CD4-positive, alpha-beta memory T cell (primary cell): ENCODE measurements at regions of chr6 and their contacts with region 1.

Region 1: GRCh38 chr6:27809939-27810767 is 102.0 kb downstream of the OR2B2 start:
- DNase-seq: peak; percentile 85 to 94 (median 92)
- H3K4me3 ChIP-seq: peak overlapping the region; percentile 31 to 67
- H3K4me3 Mint-ChIP-seq: peak overlapping the region; percentile 92 to 99 (median 96)
- H3K27ac ChIP-seq: peak overlapping the region; percentile 79
- H3K27ac Mint-ChIP-seq: peak overlapping the region; percentile 94 to 98 (median 97)
- H3K4me1 ChIP-seq: peaks cover 49% of the 10 kb centered on the region
- H3K4me1 Mint-ChIP-seq: peaks cover 39 to 74% (median 50%) of the 10 kb centered on the region in 4 donors
- H3K27me3 ChIP-seq: no peaks in the 10 kb centered on the region
- H3K27me3 Mint-ChIP-seq: no peaks in the 10 kb centered on the region

Region 2: DNA sequence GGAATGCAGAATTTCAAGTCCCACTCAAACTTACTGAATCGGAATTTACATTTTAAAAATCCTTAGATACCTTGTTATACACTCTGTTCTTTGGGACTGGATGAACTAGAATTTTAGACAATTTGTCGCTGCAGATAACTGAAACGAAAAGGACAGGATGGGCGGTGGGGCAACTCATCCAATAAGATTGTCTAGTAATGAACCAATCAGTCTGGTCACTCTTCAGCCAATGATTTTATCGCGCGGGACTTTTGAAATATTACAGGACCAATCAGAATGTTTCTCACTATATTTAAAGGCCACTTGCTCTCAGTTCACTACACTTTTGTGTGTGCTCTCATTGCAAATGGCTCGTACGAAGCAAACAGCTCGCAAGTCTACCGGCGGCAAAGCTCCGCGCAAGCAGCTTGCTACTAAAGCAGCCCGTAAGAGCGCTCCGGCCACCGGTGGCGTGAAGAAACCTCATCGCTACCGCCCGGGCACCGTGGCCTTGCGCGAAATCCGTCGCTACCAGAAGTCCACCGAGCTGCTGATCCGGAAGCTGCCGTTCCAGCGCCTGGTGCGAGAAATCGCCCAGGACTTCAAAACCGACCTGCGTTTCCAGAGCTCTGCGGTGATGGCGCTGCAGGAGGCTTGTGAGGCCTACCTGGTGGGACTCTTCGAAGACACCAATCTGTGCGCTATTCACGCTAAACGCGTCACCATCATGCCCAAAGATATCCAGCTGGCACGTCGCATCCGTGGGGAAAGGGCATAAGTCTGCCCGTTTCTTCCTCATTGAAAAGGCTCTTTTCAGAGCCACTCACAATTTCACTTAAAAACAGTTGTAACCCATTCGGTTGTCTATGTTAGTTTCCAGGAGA is 1764.9 kb before region 1 on chr6:
- CTCF ChIA-PET with region 1: no interaction called
- POLR2A ChIA-PET with region 1: interaction called, 10 read pairs
- intact Hi-C with region 1: loop called (anchors 5 kb)
- DNase-seq: peak; percentile 88 to 91 (median 90)
- H3K4me3 ChIP-seq: peak overlapping the region; percentile 72 to 74
- H3K4me3 Mint-ChIP-seq: peak overlapping the region; percentile 88 to 98 (median 94)
- H3K27ac ChIP-seq: peak overlapping the region; percentile 76
- H3K27ac Mint-ChIP-seq: peak overlapping the region; percentile 93 to 99 (median 98)
- H3K4me1 ChIP-seq: peaks cover 14% of the 10 kb centered on the region
- H3K4me1 Mint-ChIP-seq: peaks cover 12 to 28% (median 20%) of the 10 kb centered on the region in 4 donors
- H3K27me3 ChIP-seq: no peaks in the 10 kb centered on the region
- H3K27me3 Mint-ChIP-seq: no peaks in the 10 kb centered on the region

Region 3: DNA sequence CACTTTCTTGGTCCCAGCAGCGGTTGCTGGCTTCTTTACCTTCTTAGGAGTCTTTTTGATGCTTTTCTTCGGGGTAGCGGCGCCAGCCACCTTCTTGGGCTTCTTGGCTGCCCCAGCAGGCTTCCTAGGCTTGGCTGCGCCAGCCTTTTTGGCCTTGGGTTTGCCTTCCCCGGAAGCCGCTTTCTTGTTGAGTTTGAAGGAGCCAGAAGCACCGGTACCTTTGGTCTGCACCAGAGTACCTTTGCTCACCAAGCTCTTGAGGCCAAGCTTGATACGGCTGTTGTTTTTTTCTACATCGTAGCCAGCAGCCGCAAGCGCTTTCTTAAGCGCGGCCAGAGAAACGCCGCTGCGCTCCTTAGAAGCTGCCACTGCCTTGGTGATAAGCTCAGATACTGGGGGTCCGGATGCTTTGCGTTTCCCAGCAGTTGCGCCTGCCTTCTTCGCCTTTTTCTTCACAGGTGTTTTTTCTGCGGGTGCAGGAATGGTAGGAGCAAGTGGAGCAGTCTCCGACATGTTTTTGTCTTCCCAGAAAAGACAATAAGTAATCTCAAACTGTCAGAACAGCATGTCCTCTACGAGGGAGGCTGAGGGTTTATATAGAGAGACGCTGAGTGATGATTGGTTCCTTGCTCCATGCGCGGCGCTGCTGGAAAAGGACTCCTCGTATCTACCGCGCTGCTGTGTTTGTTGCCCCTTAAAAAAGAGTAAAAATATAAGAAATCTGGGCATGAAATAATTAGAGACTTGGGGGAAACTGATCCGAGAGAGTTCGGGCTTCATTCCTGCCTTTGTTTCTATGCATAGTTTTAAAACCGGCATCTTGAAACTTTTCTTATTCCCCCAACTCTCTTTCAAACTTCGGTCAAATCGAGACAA is 1575.5 kb before region 1 on chr6:
- CTCF ChIA-PET with region 1: no interaction called
- POLR2A ChIA-PET with region 1: interaction called, 17 read pairs
- intact Hi-C with region 1: no loop called
- DNase-seq: peak; percentile 70 to 87 (median 85)
- H3K4me3 ChIP-seq: peak overlapping the region; percentile 66 to 95
- H3K4me3 Mint-ChIP-seq: peak overlapping the region; percentile 93 to 99 (median 96)
- H3K27ac ChIP-seq: peak overlapping the region; percentile 83
- H3K27ac Mint-ChIP-seq: peak overlapping the region; percentile 90 to 99 (median 96)
- H3K4me1 ChIP-seq: peaks cover 23% of the 10 kb centered on the region
- H3K4me1 Mint-ChIP-seq: peaks cover 18 to 43% (median 26%) of the 10 kb centered on the region in 4 donors
- H3K27me3 ChIP-seq: no peaks in the 10 kb centered on the region
- H3K27me3 Mint-ChIP-seq: no peaks in the 10 kb centered on the region

Region 4: DNA sequence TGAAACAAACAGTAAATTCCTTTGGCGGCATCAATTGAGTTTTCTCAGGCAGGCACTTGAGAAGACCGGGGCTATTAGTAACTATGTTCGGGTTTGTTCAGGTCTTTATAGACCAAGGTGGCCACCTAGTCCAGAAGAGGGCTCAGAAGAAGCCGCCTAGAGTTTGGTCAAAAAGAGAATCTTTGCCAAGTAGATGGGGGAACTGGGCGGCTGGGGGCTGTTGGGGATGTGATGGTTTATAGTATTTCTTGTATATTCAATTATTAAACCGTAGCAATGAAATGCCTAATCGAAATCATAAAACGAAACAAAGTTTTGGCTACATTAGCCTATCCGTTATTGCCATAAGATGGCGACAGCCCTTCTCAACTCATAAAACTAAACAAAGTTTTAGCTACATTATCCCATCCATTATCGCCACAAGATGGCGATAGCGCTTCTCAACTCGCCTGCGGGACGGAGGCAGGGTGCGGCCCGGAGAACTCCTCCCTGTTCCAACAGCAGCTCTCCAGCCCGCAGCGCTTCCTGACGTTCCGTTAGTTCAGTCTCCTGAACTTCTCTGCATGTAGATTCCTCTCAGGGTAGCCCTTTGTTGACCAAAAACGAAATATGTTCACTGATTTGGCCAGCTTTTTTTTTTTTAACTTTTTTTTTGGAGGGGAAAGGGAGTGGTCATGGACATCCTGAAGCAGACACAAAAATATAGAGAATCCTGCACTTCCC is 683.2 kb before region 1 on chr6:
- CTCF ChIA-PET with region 1: interaction called, 7 read pairs
- POLR2A ChIA-PET with region 1: interaction called, 143 read pairs
- intact Hi-C with region 1: loop called (anchors 1 kb)
- DNase-seq: peak; percentile 78 to 86 (median 83)
- H3K4me3 ChIP-seq: peak overlapping the region; percentile 13 to 34
- H3K4me3 Mint-ChIP-seq: peak overlapping the region; percentile 71 to 87 (median 80)
- H3K27ac ChIP-seq: peak overlapping the region; percentile 37
- H3K27ac Mint-ChIP-seq: peak overlapping the region; percentile 79 to 91 (median 89)
- H3K4me1 ChIP-seq: peaks cover 16% of the 10 kb centered on the region
- H3K4me1 Mint-ChIP-seq: peaks cover 14 to 16% (median 16%) of the 10 kb centered on the region in 4 donors
- H3K27me3 ChIP-seq: no peaks in the 10 kb centered on the region
- H3K27me3 Mint-ChIP-seq: no peaks in the 10 kb centered on the region

Region 5: DNA sequence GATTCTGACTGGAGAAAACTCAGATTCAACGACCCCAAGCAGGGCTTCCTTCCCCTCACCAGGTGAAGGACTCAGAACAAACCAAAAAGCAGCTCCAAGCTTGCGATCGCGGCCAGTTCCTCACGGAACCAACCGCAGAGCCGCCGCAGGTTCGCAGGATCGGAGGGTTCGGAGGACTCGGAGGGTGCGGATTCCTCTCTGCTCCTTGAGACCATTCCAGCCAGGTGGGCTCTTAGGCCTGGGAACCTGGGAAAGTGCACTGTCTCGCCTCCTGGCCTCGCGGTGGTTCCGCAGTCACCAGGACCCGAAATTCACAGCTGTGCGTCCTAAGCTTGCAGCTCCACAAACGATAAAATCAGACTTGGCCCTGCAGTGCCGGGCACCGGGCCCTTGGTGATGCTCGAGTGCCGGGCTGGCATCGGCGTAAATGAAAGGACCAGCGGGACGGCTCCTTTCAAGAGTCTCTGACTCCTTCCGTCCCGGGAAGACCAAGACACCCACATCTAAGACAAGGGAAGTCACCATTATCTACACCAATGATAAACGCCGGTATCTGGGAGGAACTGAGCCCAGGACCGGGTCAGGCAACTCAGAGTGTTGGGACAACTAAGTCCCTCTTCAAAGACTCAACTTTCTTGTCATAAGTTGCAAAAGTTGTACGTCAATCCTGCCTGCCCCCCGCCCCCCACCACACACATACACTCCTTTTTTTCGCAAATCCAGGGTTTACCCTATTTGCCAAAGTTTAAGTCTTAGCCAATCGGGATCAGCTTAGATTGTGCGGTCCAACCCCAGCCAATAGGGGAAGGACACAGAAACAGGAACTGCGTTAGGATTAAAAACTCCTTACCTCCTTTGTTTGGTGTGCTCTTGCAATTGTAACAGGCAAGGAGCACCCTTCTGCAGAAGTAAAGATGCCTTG is 632.4 kb before region 1 on chr6:
- CTCF ChIA-PET with region 1: interaction called, 3 read pairs
- POLR2A ChIA-PET with region 1: interaction called, 13 read pairs
- intact Hi-C with region 1: no loop called
- DNase-seq: peak; percentile 68 to 80 (median 70)
- H3K4me3 ChIP-seq: peak overlapping the region; percentile 98
- H3K4me3 Mint-ChIP-seq: peak overlapping the region; percentile 95 to 99 (median 98)
- H3K27ac ChIP-seq: peak overlapping the region; percentile 77
- H3K27ac Mint-ChIP-seq: peak overlapping the region; percentile 86 to 100 (median 93)
- H3K4me1 ChIP-seq: peaks cover 7% of the 10 kb centered on the region
- H3K4me1 Mint-ChIP-seq: peaks cover 5 to 29% (median 13%) of the 10 kb centered on the region in 4 donors
- H3K27me3 ChIP-seq: no peaks in the 10 kb centered on the region
- H3K27me3 Mint-ChIP-seq: peaks cover 3 to 4% of the 10 kb centered on the region in 2 donors

Region 6: DNA sequence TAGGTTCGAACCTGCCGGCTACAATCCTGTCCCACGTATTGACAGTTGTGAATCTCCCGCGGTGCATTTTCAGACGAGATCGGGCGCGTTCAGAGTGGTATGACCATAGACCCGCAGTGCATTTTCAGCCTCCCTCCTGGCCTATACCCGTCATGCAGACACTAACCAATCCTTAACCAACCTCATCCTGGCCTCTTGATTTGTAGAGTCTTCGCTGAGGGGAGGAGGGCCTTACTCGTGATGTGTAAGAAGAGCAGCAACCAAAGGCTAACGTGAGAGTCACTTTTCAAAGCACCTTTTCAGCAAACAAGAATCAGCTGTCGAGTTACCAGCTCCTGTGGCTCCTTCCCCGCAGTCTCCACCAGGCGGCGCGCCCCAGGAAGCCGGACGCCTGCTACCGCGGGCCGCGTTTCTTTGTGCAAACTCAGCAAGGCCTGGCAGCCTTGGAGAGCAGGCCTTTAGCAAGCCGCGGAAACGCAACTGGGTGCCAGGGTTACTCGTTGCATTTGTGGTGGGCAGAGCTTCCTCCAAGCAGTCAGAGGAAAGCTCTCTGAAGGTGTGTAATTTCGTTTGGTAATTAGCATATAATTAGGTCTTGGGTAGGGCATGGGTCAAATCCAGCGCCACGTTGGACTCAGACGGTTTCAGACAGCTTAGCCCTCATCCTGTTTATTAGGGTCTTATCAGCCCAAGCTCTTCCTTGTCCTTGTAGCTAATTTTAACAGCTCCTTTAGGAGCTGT is 37.7 kb before region 1 on chr6:
- CTCF ChIA-PET with region 1: interaction called, 19 read pairs
- POLR2A ChIA-PET with region 1: interaction called, 10 read pairs
- intact Hi-C with region 1: no loop called
- DNase-seq: peak; percentile 82 to 85 (median 84)
- H3K4me3 ChIP-seq: no peak overlapping the region
- H3K4me3 Mint-ChIP-seq: peak overlapping the region in 5 of 8 donors; percentile 0 to 60 (median 51)
- H3K27ac ChIP-seq: no peak overlapping the region
- H3K27ac Mint-ChIP-seq: peak overlapping the region in 5 of 7 donors; percentile 4 to 80 (median 15)
- H3K4me1 ChIP-seq: peaks cover 11% of the 10 kb centered on the region
- H3K4me1 Mint-ChIP-seq: peaks cover 3 to 17% (median 9%) of the 10 kb centered on the region in 4 donors
- H3K27me3 ChIP-seq: peaks cover 5% of the 10 kb centered on the region
- H3K27me3 Mint-ChIP-seq: peaks cover 7 to 26% of the 10 kb centered on the region in 2 donors

Region 7: GRCh38 chr6:27864906-27865849 is 55.0 kb after region 1 on chr6:
- CTCF ChIA-PET with region 1: interaction called, 74 read pairs
- POLR2A ChIA-PET with region 1: interaction called, 640 read pairs
- intact Hi-C with region 1: loop called (anchors 1 kb)
- DNase-seq: peak; percentile 86 to 93 (median 91)
- H3K4me3 ChIP-seq: peak overlapping the region; percentile 33 to 69
- H3K4me3 Mint-ChIP-seq: peak overlapping the region; percentile 96 to 99 (median 99)
- H3K27ac ChIP-seq: peak overlapping the region; percentile 62
- H3K27ac Mint-ChIP-seq: peak overlapping the region; percentile 94 to 99 (median 98)
- H3K4me1 ChIP-seq: peaks cover 31% of the 10 kb centered on the region
- H3K4me1 Mint-ChIP-seq: peaks cover 18 to 46% (median 34%) of the 10 kb centered on the region in 4 donors
- H3K27me3 ChIP-seq: no peaks in the 10 kb centered on the region
- H3K27me3 Mint-ChIP-seq: no peaks in the 10 kb centered on the region